ENCODE measurements at regions of chr17 and their contacts with region 1.

Region 1: DNA sequence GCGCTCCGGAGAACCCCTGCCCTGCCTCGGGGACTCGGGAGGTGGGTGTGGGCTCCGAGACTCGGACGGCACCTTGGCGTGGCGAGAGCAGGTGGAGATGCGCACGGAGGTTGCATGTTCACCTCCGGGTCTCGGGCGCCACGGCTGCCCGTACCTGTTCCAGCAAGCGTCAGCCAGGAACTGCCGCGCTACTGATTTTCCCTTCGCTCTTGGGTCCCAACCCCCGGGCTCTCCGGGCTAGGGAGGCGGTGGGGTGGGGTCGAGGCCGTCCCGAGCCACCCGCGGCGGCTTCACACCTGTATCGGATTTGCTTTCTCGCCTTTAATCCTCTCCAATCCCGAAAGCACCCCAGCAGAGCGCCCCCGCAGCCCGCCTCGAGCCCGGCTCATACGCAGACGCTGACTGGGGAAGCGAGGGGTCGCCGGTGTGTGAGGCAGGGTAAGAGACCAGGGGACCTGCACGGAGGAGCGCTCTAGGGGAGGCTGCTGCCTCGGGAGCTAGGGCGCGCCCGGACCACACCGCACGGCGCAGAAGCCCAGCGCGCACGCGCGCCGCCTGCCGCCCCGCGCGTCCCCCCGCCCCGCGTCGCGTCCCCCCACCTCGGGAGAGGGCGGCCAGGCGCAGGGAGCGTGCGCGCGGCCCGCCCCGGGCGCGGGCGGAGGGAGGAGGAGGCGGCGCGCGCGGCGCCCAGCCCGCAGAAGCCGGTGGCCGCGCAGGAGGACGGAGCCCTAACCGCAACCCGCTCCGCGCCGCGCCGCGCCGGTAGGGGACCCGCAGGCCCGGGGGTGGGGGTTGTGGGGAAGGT is at the start of gene DUSP14:
- DNase-seq: peak; percentile 69 to 94 (median 83)
- ATAC-seq: peak; percentile 78
- H3K4me3 ChIP-seq: peak within 1 kb of the TSS; percentile 96
- H3K4me3 Mint-ChIP-seq: peak within 1 kb of the TSS; percentile 98
- H3K27ac ChIP-seq: peak within 1 kb of the TSS; percentile 59 to 64
- H3K27ac Mint-ChIP-seq: peak within 1 kb of the TSS; percentile 91
- H3K4me1 ChIP-seq: peaks cover 29% of the 10 kb centered on the region
- H3K4me1 Mint-ChIP-seq: peaks cover 30% of the 10 kb centered on the region
- H3K27me3 ChIP-seq: no peaks in the 10 kb centered on the region
- H3K27me3 Mint-ChIP-seq: no peaks in the 10 kb centered on the region
- CTCF ChIP-seq: no peak
- total RNA-seq, gene DUSP14: 4.4 to 4.9 TPM

Region 2: GRCh38 chr17:36601303-36602029 is 887.9 kb before region 1 on chr17 and contains the start of gene MRM1:
- CTCF ChIA-PET with region 1: no interaction called
- POLR2A ChIA-PET with region 1: no interaction called
- intact Hi-C with region 1: loop called in 1 of 2 experiments (anchors 2 kb)
- DNase-seq: peak; percentile 80 to 94 (median 87)
- ATAC-seq: peak; percentile 74
- H3K4me3 ChIP-seq: peak within 1 kb of the TSS; percentile 89
- H3K4me3 Mint-ChIP-seq: peak within 1 kb of the TSS; percentile 97
- H3K27ac ChIP-seq: peak within 1 kb of the TSS; percentile 57 to 65
- H3K27ac Mint-ChIP-seq: peak within 1 kb of the TSS; percentile 94
- H3K4me1 ChIP-seq: peaks cover 31% of the 10 kb centered on the region
- H3K4me1 Mint-ChIP-seq: peaks cover 47% of the 10 kb centered on the region
- H3K27me3 ChIP-seq: no peaks in the 10 kb centered on the region
- H3K27me3 Mint-ChIP-seq: no peaks in the 10 kb centered on the region
- CTCF ChIP-seq: no peak
- total RNA-seq, gene MRM1: 0.81 to 1.1 TPM

Region 3: DNA sequence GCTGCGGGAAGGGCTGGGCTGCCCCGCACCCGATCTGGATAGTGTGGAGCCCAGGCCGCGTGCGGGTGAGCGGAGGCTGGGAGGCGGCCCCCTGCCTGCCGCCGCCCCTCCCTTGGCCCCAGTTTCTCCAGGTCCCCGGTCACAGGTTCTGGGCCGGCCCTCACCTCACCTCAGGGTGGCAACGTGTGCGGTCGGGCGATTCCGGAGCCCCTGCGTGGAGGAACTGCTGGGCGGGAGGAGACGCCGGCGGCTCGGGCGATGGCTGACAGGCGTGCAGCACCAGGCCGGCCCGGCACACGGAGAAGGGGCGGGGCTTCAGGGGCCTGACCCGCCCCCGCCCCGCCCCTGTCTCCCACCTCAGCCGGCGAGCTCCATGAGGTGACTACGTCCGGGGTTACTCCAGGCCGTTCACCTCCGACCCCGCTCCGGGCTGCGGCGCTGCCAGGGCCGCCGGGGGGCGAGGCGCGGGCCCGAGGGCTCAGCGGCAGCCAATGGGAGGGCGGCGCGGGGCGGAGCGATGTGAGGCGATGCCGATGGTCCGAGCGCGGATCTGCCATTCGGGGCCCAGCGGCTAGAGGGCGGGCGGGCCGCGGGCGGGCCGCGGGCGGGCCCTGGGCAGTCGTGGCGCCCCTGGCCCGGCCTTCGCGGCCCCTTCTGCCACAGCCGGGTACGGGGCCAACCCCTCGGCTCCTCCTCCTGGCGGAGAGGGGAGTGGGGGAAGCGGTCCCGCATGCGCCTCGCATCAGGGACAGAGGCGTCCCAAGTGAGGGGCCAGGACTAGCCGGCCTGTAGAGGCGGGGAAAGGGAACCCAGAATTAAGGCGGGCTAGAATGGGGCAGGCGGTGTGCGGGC is 130.3 kb before region 1 on chr17:
- CTCF ChIA-PET with region 1: no interaction called
- POLR2A ChIA-PET with region 1: interaction called, 3 read pairs
- intact Hi-C with region 1: loop called in 1 of 2 experiments (anchors 5 kb)
- DNase-seq: peak; percentile 73 to 96 (median 84)
- ATAC-seq: peak; percentile 95
- H3K4me3 ChIP-seq: peak overlapping the region; percentile 74
- H3K4me3 Mint-ChIP-seq: peak overlapping the region; percentile 93
- H3K27ac ChIP-seq: peak overlapping the region; percentile 41 to 63
- H3K27ac Mint-ChIP-seq: peak overlapping the region; percentile 89
- H3K4me1 ChIP-seq: peaks cover 16% of the 10 kb centered on the region
- H3K4me1 Mint-ChIP-seq: peaks cover 22% of the 10 kb centered on the region
- H3K27me3 ChIP-seq: no peaks in the 10 kb centered on the region
- H3K27me3 Mint-ChIP-seq: no peaks in the 10 kb centered on the region
- CTCF ChIP-seq: no peak

Region 4: GRCh38 chr17:37406635-37407461 is 82.6 kb before region 1 on chr17 and contains the starts of genes ACACA and TADA2A:
- CTCF ChIA-PET with region 1: interaction called, 3 read pairs
- POLR2A ChIA-PET with region 1: interaction called, 7 read pairs
- intact Hi-C with region 1: loop called (anchors 1 to 5 kb)
- DNase-seq: peak; percentile 43 to 89 (median 64)
- ATAC-seq: peak; percentile 87
- H3K4me3 ChIP-seq: peak within 1 kb of the TSS; percentile 96
- H3K4me3 Mint-ChIP-seq: peak within 1 kb of the TSS; percentile 99
- H3K27ac ChIP-seq: peak within 1 kb of the TSS; percentile 36 to 52
- H3K27ac Mint-ChIP-seq: peak within 1 kb of the TSS; percentile 92
- H3K4me1 ChIP-seq: peaks cover 27% of the 10 kb centered on the region
- H3K4me1 Mint-ChIP-seq: peaks cover 48% of the 10 kb centered on the region
- H3K27me3 ChIP-seq: no peaks in the 10 kb centered on the region
- H3K27me3 Mint-ChIP-seq: no peaks in the 10 kb centered on the region
- CTCF ChIP-seq: no peak
- total RNA-seq, gene ACACA: 26.0 to 28.9 TPM
- total RNA-seq, gene TADA2A: 6.7 to 8.0 TPM

Region 5: GRCh38 chr17:37413875-37414519 is 75.4 kb before region 1 on chr17:
- CTCF ChIA-PET with region 1: interaction called, 3 read pairs
- POLR2A ChIA-PET with region 1: no interaction called
- intact Hi-C with region 1: loop called (anchors 2 to 5 kb)
- DNase-seq: no peak
- ATAC-seq: no peak
- H3K4me3 ChIP-seq: no peak overlapping the region
- H3K4me3 Mint-ChIP-seq: peak overlapping the region; percentile 16
- H3K27ac ChIP-seq: no peak overlapping the region
- H3K27ac Mint-ChIP-seq: no peak overlapping the region
- H3K4me1 ChIP-seq: peaks cover 1% of the 10 kb centered on the region
- H3K4me1 Mint-ChIP-seq: peaks cover 11% of the 10 kb centered on the region
- H3K27me3 ChIP-seq: no peaks in the 10 kb centered on the region
- H3K27me3 Mint-ChIP-seq: no peaks in the 10 kb centered on the region
- CTCF ChIP-seq: no peak

Region 6: GRCh38 chr17:37609170-37610040 is 120.0 kb after region 1 on chr17 and contains the start of gene SYNRG:
- CTCF ChIA-PET with region 1: interaction called, 3 read pairs
- POLR2A ChIA-PET with region 1: interaction called, 10 read pairs
- intact Hi-C with region 1: loop called in 1 of 2 experiments (anchors 2 kb)
- DNase-seq: peak; percentile 86 to 98 (median 94)
- ATAC-seq: peak; percentile 78
- H3K4me3 ChIP-seq: peak within 1 kb of the TSS; percentile 79
- H3K4me3 Mint-ChIP-seq: peak within 1 kb of the TSS; percentile 99
- H3K27ac ChIP-seq: peak within 1 kb of the TSS; percentile 77 to 92
- H3K27ac Mint-ChIP-seq: peak within 1 kb of the TSS; percentile 93
- H3K4me1 ChIP-seq: peaks cover 24% of the 10 kb centered on the region
- H3K4me1 Mint-ChIP-seq: peaks cover 48% of the 10 kb centered on the region
- H3K27me3 ChIP-seq: no peaks in the 10 kb centered on the region
- H3K27me3 Mint-ChIP-seq: no peaks in the 10 kb centered on the region
- CTCF ChIP-seq: peak; percentile 69
- total RNA-seq, gene SYNRG: 40.0 to 45.8 TPM

Region 7: GRCh38 chr17:37643118-37643766 is 153.8 kb after region 1 on chr17 and contains the start of gene DDX52:
- CTCF ChIA-PET with region 1: no interaction called
- POLR2A ChIA-PET with region 1: no interaction called
- intact Hi-C with region 1: loop called in 1 of 2 experiments (anchors 5 kb)
- DNase-seq: peak; percentile 79 to 96 (median 86)
- ATAC-seq: peak; percentile 100
- H3K4me3 ChIP-seq: peak within 1 kb of the TSS; percentile 74
- H3K4me3 Mint-ChIP-seq: peak within 1 kb of the TSS; percentile 97
- H3K27ac ChIP-seq: peak within 1 kb of the TSS; percentile 61 to 66
- H3K27ac Mint-ChIP-seq: peak within 1 kb of the TSS; percentile 92
- H3K4me1 ChIP-seq: peaks cover 14% of the 10 kb centered on the region
- H3K4me1 Mint-ChIP-seq: peaks cover 40% of the 10 kb centered on the region
- H3K27me3 ChIP-seq: peaks cover 16% of the 10 kb centered on the region in 2 experiments
- H3K27me3 Mint-ChIP-seq: peaks cover 41% of the 10 kb centered on the region
- CTCF ChIP-seq: no peak
- total RNA-seq, gene DDX52: 27.4 to 30.1 TPM